G401 (cell line): ENCODE measurements at regions of chr15 and their contacts with region 1.

Region 1: GRCh38 chr15:60315878-60316277 is 81.9 kb downstream of the ANXA2 start:
- DNase-seq: no peak

Region 2: GRCh38 chr15:60255390-60255789 is 60.5 kb before region 1 on chr15:
- in situ Hi-C with region 1: loop called (anchors 5 kb)
- DNase-seq: no peak

Region 3: GRCh38 chr15:60448668-60449360 is 132.9 kb after region 1 on chr15:
- in situ Hi-C with region 1: no loop called
- DNase-seq: no peak